Naive thymus-derived CD4-positive, alpha-beta T cell (primary cell): ENCODE measurements at regions of chr5 and their contacts with region 1.

Region 1: GRCh38 chr5:177209610-177210009 is 76.0 kb downstream of the NSD1 start:
- DNase-seq: no peak
- ATAC-seq: no peak
- H3K4me3 ChIP-seq: no peak overlapping the region
- H3K4me3 Mint-ChIP-seq: no peak overlapping the region
- H3K27ac ChIP-seq: no peak overlapping the region
- H3K27ac Mint-ChIP-seq: peak overlapping the region in 1 of 9 donors; percentile 68
- H3K4me1 ChIP-seq: no peaks in the 10 kb centered on the region
- H3K4me1 Mint-ChIP-seq: peaks cover 0 to 14% (median 1%) of the 10 kb centered on the region in 7 donors
- H3K27me3 ChIP-seq: no peaks in the 10 kb centered on the region
- H3K27me3 Mint-ChIP-seq: no peaks in the 10 kb centered on the region

Region 2: GRCh38 chr5:176166427-176166826 is 1043.2 kb before region 1 on chr5:
- CTCF ChIA-PET with region 1: no interaction called
- POLR2A ChIA-PET with region 1: no interaction called
- intact Hi-C with region 1: no loop called
- DNase-seq: no peak
- ATAC-seq: no peak
- H3K4me3 ChIP-seq: no peak overlapping the region
- H3K4me3 Mint-ChIP-seq: no peak overlapping the region
- H3K27ac ChIP-seq: no peak overlapping the region
- H3K27ac Mint-ChIP-seq: no peak overlapping the region
- H3K4me1 ChIP-seq: no peaks in the 10 kb centered on the region
- H3K4me1 Mint-ChIP-seq: peaks cover 0 to 2% (median 0%) of the 10 kb centered on the region in 7 donors
- H3K27me3 ChIP-seq: no peaks in the 10 kb centered on the region
- H3K27me3 Mint-ChIP-seq: peaks cover 8 to 74% (median 41%) of the 10 kb centered on the region in 5 donors

Region 3: DNA sequence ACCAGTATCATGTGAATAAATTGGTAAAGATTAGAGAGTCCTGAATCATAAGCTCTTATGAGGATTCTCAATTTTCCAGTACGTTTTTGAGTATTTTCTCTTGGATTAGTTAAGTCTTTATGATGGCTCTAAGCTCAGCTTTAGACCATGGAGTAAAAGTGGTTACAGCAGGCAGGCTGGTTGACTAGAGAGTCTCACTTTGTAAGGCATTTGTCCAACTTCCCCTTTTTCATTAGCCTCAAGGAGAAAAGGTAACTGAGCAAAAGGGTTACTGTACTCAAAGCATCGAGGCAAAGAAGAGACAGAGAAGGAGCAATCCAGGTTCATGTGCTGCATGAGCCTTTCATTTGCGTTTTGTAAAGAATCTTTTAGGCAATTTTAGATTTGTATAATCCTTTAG is 829.7 kb before region 1 on chr5:
- CTCF ChIA-PET with region 1: no interaction called
- POLR2A ChIA-PET with region 1: no interaction called
- intact Hi-C with region 1: no loop called
- DNase-seq: no peak
- ATAC-seq: no peak
- H3K4me3 ChIP-seq: no peak overlapping the region
- H3K4me3 Mint-ChIP-seq: no peak overlapping the region
- H3K27ac ChIP-seq: no peak overlapping the region
- H3K27ac Mint-ChIP-seq: peak overlapping the region in 2 of 9 donors; percentile 52 to 53
- H3K4me1 ChIP-seq: no peaks in the 10 kb centered on the region
- H3K4me1 Mint-ChIP-seq: no peaks in the 10 kb centered on the region
- H3K27me3 ChIP-seq: no peaks in the 10 kb centered on the region
- H3K27me3 Mint-ChIP-seq: no peaks in the 10 kb centered on the region

Region 4: GRCh38 chr5:177081859-177082258 is 127.8 kb before region 1 on chr5:
- CTCF ChIA-PET with region 1: no interaction called
- POLR2A ChIA-PET with region 1: interaction called, 11 read pairs
- intact Hi-C with region 1: no loop called
- DNase-seq: no peak
- ATAC-seq: no peak
- H3K4me3 ChIP-seq: no peak overlapping the region
- H3K4me3 Mint-ChIP-seq: no peak overlapping the region
- H3K27ac ChIP-seq: no peak overlapping the region
- H3K27ac Mint-ChIP-seq: no peak overlapping the region
- H3K4me1 ChIP-seq: no peaks in the 10 kb centered on the region
- H3K4me1 Mint-ChIP-seq: peaks cover 5 to 13% (median 6%) of the 10 kb centered on the region in 7 donors
- H3K27me3 ChIP-seq: no peaks in the 10 kb centered on the region
- H3K27me3 Mint-ChIP-seq: peaks cover 0 to 28% (median 0%) of the 10 kb centered on the region in 5 donors